Posterior cingulate gyrus (tissue), 11 donors: ENCODE measurements at regions of chrX and their contacts with region 1.

Region 1: GRCh38 chrX:44872817-44873414 is at the start of gene KDM6A:
- DNase-seq: peak; percentile 93 to 100 (median 100)

Region 2: DNA sequence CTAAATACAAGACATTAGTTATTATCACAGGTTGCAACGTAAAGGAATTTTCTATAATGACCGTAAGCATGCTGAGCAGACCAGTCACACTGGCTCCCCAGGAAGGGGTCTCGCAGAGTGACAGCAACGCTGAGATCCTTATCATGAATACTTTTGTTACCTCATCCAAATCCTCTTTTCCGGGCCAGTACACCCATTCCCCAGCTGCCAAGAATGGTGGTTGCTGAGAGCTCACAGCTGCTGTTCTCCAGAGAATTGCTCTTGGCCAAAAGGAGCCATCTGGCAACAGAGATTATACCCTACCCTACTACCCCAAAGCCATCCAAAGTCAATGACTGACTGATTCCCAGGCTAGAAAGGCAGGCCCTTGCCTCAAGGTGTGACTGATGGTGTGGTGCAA is 421.9 kb before region 1 on chrX:
- intact Hi-C with region 1: no loop called
- DNase-seq: no peak

Region 3: DNA sequence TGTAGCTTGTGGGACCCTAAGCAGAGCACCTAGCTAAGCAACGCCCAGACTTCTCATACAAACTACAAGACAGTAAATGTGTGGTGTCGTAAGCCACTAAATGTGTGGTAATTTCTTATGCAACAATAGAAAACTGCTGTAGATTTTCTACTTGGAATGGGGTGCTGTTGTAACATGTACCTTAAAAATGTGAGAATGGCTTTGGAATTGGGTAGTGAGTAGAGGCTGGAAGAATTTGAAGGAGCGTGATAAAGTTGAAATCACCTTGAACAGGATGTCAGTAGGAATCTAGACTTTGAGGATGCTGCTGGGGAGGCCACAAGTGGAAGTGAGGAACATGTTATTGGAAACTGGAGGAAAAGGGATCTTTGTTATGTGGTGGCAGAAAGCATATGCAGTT is 287.1 kb before region 1 on chrX:
- intact Hi-C with region 1: no loop called
- DNase-seq: no peak

Region 4: DNA sequence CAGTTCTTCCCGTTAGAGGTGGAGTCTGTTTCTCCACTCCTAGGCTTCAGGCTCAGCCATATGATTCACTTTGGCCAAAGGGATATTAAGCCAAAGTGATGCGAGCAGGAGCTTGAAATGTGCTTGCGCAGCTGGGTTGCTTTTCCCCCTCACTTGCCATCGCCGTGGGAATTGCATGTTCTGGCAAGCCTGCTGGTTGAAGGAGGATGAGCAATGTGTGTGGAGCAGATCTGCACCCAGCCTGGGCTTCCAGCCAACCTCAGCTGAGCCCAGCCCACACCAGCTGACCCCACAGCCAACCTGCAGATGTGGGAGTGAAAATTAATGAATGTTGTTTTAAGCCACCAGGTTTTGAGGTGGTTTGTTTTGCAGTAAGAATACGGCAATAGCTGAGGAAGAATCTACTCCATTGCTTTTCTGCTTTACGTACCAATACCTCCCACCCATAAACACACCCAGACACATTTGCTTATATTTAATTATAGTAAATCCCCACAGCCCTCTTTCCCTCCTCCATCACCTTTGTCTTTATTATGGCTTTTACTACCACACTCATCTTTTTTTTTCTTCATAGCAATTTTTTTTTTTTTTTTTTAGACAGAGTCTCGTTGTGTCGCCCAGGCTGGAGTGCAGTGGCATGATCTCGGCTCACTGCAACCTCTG is 197.4 kb before region 1 on chrX:
- intact Hi-C with region 1: no loop called
- DNase-seq: peak; percentile 23 to 93 (median 41)

Region 5: DNA sequence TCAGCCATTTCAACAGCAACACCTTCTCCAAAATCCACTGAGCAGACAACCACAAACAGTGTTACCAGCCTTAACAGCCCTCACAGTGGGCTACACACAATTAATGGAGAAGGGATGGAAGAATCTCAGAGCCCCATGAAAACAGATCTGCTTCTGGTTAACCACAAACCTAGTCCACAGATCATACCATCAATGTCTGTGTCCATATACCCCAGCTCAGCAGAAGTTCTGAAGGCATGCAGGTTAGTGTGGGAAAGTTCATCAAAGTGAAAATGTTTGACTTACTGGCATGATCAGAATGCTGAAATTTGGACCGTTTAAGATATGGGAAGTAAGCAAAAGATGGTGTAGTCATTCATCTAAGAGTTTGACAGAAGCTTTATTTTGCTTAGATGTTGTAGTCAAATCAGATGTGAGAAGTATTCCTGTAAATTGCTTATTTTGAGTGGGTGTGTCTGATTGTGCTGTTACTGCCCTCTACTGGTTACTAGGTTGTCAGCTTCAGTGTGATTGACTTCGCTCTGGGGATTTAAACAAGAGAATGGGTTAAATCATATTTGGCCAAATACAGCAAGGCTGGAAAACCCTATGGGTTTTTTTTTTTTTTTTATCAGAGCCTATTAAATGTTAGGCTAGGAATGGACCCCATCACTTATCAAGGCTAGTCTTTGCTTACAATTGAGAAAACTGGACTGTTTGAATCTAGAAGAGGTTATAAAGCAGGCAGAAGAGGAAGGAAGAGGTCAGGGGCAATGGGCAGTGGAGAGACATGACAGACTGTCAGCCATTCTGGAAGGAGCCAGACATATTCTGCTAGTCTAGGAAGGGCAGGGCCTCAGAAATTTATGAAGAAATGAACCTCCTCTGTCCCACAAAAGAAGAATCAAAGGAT is 197.4 kb after region 1 on chrX:
- intact Hi-C with region 1: loop called (anchors 2 kb)
- DNase-seq: no peak

Region 6: GRCh38 chrX:45134315-45134731 is 261.4 kb after region 1 on chrX:
- intact Hi-C with region 1: loop called (anchors 2 kb)
- DNase-seq: peak; percentile 41 to 97 (median 75)

Region 7: GRCh38 chrX:45186643-45187026 is 313.7 kb after region 1 on chrX:
- intact Hi-C with region 1: loop called (anchors 1 kb)
- DNase-seq: no peak